Caco-2 (cell line): ENCODE measurements at regions of chr6 and their contacts with region 1.

Region 1: GRCh38 chr6:42547407-42548329 is 16.2 kb upstream of the UBR2 start:
- DNase-seq: peak; percentile 53 to 82
- H3K4me3 ChIP-seq: peak overlapping the region; percentile 26
- H3K4me3 Mint-ChIP-seq: peak overlapping the region; percentile 69
- H3K27ac Mint-ChIP-seq: peak overlapping the region; percentile 56
- H3K4me1 ChIP-seq: no peaks in the 10 kb centered on the region
- H3K4me1 Mint-ChIP-seq: peaks cover 6% of the 10 kb centered on the region
- H3K27me3 ChIP-seq: no peaks in the 10 kb centered on the region
- H3K27me3 Mint-ChIP-seq: no peaks in the 10 kb centered on the region
- CTCF ChIP-seq: peak; percentile 89 to 91

Region 2: GRCh38 chr6:42498473-42499128 is 49.1 kb before region 1 on chr6:
- CTCF ChIA-PET with region 1: interaction called, 12 read pairs
- POLR2A ChIA-PET with region 1: interaction called, 3 read pairs
- intact Hi-C with region 1: no loop called
- DNase-seq: peak; percentile 47 to 53
- H3K4me3 ChIP-seq: no peak overlapping the region
- H3K4me3 Mint-ChIP-seq: no peak overlapping the region
- H3K27ac Mint-ChIP-seq: no peak overlapping the region
- H3K4me1 ChIP-seq: no peaks in the 10 kb centered on the region
- H3K4me1 Mint-ChIP-seq: peaks cover 5% of the 10 kb centered on the region
- H3K27me3 ChIP-seq: no peaks in the 10 kb centered on the region
- H3K27me3 Mint-ChIP-seq: peaks cover 9% of the 10 kb centered on the region
- CTCF ChIP-seq: peak in 1 of 2 experiments; percentile 49

Region 3: GRCh38 chr6:42563697-42564505 is 16.2 kb after region 1 on chr6 and contains the start of gene UBR2:
- CTCF ChIA-PET with region 1: interaction called, 25 read pairs
- POLR2A ChIA-PET with region 1: interaction called, 3 read pairs
- intact Hi-C with region 1: no loop called
- DNase-seq: peak; percentile 96 to 98
- H3K4me3 ChIP-seq: peak within 1 kb of the TSS; percentile 84
- H3K4me3 Mint-ChIP-seq: peak within 1 kb of the TSS; percentile 98
- H3K27ac Mint-ChIP-seq: peak within 1 kb of the TSS; percentile 96
- H3K4me1 ChIP-seq: no peaks in the 10 kb centered on the region
- H3K4me1 Mint-ChIP-seq: peaks cover 16% of the 10 kb centered on the region
- H3K27me3 ChIP-seq: no peaks in the 10 kb centered on the region
- H3K27me3 Mint-ChIP-seq: no peaks in the 10 kb centered on the region
- CTCF ChIP-seq: peak; percentile 35 to 76
- total RNA-seq, gene UBR2: 21.7 TPM in 2 replicates

Region 4: GRCh38 chr6:42610416-42610815 is 62.7 kb after region 1 on chr6:
- CTCF ChIA-PET with region 1: no interaction called
- POLR2A ChIA-PET with region 1: no interaction called
- intact Hi-C with region 1: no loop called
- DNase-seq: no peak
- H3K4me3 ChIP-seq: no peak overlapping the region
- H3K4me3 Mint-ChIP-seq: no peak overlapping the region
- H3K27ac Mint-ChIP-seq: no peak overlapping the region
- H3K4me1 ChIP-seq: no peaks in the 10 kb centered on the region
- H3K4me1 Mint-ChIP-seq: no peaks in the 10 kb centered on the region
- H3K27me3 ChIP-seq: no peaks in the 10 kb centered on the region
- H3K27me3 Mint-ChIP-seq: no peaks in the 10 kb centered on the region
- CTCF ChIP-seq: no peak